AG04450 (cell line): ENCODE measurements at regions of chr11 and their contacts with region 1.

Region 1: GRCh38 chr11:103700622-103701021 is 335.8 kb upstream of the DDI1 start:
- DNase-seq: peak; percentile 13
- H3K4me3 ChIP-seq: no peak overlapping the region
- H3K27ac ChIP-seq: peak overlapping the region; percentile 53
- H3K27me3 ChIP-seq: no peaks in the 10 kb centered on the region
- CTCF ChIP-seq: no peak

Region 2: GRCh38 chr11:103624708-103625623 is 75.7 kb before region 1 on chr11:
- CTCF ChIA-PET with region 1: interaction called, 12 read pairs
- POLR2A ChIA-PET with region 1: no interaction called
- DNase-seq: peak; percentile 84
- H3K4me3 ChIP-seq: no peak overlapping the region
- H3K27ac ChIP-seq: peak overlapping the region; percentile 94
- H3K27me3 ChIP-seq: no peaks in the 10 kb centered on the region
- CTCF ChIP-seq: no peak

Region 3: DNA sequence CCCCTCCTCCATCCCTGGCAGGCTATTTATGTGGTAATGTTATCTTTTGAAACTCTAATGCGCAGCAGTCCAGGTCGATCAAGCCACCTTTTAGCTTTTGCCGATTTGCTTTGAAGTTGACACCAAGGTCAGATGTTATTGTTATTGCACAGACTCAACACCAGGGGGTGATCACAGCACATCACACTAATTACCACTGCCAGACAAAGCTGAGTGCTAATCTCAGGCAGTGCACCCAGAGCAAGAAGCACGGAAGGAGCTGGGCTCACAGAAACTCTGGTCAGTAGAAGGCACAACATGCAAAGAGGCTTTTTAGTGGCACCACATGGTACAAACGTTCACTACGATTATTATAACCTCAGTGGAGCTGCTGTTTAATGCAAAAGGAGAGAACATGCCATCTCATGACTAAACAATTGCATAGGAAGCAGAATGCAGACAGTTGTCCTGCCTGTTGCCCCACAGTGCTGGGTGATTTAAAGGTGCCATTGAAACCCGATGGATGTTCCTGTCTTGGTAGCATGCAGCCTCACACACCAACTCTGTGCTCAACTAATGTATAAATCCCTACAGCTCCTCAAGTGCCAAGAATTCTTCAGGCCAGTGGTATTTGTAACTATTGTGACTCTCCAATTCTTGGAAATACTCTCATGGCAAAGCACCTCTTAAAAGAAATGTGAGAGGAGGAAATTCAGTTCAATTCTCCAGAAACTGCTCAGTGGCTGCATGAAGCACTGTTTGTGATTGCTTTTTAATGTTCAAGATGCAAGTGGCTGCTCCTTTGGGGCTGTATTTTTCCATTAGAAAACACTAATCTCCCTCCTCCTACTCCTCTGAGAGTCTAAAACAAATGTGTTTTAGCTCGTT is 18.1 kb before region 1 on chr11:
- CTCF ChIA-PET with region 1: interaction called, 23 read pairs
- POLR2A ChIA-PET with region 1: no interaction called
- DNase-seq: peak; percentile 39
- H3K4me3 ChIP-seq: no peak overlapping the region
- H3K27ac ChIP-seq: no peak overlapping the region
- H3K27me3 ChIP-seq: no peaks in the 10 kb centered on the region
- CTCF ChIP-seq: peak; percentile 75